ENCODE measurements at regions of chr17 and their contacts with region 1.

Region 1: DNA sequence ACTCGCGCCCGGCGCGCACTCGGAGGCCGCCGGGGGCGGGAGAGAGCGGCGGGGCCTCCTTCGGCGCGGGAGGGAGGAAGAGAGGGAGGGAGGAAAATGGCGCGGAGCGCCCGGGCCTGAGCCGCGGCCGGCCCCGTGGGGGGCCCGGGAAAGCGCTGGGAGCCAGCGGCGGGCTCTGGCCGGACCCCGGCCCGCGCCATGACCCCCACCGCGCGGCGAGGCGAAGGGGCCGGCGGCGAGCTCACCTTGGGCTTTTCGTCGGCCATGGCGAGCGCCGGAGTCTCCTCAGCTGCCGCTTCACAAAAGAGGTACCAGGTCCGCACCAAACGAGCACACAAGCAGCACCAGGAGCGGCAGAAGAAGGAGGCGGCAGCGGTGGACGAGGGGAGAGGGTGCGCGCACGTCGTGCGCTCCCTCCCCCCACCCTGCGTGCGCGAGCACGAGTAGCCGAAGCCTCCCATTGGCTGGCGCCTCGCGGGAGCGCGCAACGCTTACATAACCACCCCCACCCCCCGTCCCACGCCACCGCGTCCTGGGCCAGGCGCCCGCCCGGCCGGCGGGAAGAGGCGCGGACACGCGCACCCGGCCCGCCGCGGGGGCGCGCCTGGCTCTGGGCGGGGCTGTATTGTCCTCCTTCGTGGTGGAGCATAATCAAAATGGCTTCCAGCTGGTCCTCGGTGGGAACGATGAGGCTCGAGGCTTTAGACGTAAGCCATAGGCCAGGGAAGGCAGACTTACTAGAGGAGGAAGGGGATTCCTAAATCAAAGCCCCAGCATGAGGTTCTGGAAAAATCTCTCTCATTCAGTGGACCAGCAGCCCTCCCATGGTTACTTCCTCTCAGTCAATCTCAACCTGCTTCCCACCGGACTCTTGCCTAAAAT is at the start of gene SUMO2:
- DNase-seq: peak; percentile 92
- H3K4me3 Mint-ChIP-seq: peak within 1 kb of the TSS; percentile 88
- H3K27ac Mint-ChIP-seq: peak within 1 kb of the TSS; percentile 98
- H3K4me1 Mint-ChIP-seq: peaks cover 28% of the 10 kb centered on the region
- H3K27me3 Mint-ChIP-seq: no peaks in the 10 kb centered on the region
- total RNA-seq, gene SUMO2: 653 and 679 TPM in 2 replicates

Region 2: DNA sequence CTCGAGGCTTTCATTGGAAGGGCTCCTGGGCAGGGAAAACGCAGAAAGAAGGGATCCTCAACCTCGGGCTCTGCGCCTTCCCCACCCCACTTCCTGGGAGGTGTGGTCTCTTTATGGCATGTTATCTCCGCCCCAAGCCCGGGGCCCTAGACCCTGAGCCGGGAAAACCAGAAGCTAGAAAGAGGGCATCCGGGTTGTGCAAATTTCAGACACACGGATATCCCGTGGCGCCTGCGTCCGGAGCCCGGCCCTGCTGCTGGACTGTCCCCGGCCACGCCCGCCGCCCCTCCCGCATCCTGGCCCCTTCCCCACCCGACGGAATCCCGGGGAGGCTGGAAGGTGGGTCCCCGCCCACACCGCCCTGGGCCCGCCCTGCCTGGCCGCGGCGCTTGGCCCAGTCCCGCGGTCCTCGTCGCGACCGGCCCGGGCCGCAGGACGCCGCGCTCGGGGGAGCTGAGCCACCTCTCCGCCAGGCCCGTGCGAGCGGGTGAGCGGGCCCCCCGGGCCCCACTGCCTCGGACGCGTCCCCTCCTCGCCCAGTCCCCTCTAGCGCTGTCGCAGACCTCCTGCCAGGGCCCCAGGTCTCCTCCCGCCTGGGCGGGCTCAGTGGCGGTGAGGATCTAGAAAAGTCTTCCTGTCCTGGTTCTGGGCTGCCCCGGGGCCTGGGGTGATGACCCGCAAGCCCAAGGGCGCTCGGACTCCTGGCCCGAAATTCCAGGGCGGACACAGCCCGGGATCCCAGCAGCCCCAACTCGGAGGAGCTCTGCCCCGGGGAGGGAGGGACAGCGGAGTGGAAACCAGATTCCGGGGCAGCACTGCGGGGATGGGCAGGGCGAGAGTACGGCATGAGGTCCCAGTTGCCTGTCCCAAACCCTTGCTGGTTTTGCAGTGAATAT is 95.0 kb before region 1 on chr17 and contains the start of gene SLC16A5:
- intact Hi-C with region 1: no loop called
- DNase-seq: peak; percentile 48
- H3K4me3 Mint-ChIP-seq: peak within 1 kb of the TSS; percentile 82
- H3K27ac Mint-ChIP-seq: peak within 1 kb of the TSS; percentile 64
- H3K4me1 Mint-ChIP-seq: peaks cover 29% of the 10 kb centered on the region
- H3K27me3 Mint-ChIP-seq: no peaks in the 10 kb centered on the region
- total RNA-seq, gene SLC16A5: 11.6 and 11.8 TPM in 2 replicates

Region 3: DNA sequence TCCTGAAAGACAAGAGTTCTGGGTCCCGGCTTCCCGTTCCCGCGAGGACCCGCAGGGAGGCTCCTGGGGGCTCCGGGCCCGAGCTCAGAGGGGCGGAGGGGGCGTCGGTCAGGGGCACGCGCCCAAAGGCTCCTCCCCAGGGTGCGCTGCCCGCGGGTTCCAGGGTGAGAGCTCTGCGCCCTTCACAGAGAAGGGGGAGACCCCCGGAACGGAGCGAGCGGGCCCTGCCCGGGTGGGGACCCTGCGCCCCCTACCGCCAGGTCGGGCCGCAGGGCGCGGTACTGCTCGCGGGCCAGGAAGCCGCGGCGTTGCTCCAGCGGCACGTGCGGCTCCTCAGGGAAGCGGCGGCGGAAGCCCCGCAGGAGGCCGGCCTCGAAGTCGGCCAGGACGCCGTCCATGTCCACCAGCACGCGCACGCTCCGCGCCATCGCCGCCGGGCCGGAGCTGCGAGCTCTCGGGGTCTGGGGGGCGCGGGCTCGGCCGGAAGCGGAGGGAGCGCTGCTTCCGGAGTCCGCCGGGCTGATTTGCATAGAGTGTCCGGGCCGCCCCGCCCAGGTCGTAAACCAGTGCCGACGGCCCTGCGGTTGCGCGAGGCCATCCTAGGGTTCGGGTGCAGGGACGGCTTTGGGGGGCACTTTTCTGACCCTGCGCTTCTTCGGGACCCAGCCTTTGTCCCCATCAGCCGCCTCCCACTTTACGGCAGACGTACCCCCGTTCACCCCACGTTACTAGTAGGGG is 51.4 kb before region 1 on chr17 and contains the start of gene NT5C:
- intact Hi-C with region 1: loop called (anchors 10 kb)
- DNase-seq: peak; percentile 67
- H3K4me3 Mint-ChIP-seq: peak within 1 kb of the TSS; percentile 88
- H3K27ac Mint-ChIP-seq: peak within 1 kb of the TSS; percentile 83
- H3K4me1 Mint-ChIP-seq: peaks cover 9% of the 10 kb centered on the region
- H3K27me3 Mint-ChIP-seq: no peaks in the 10 kb centered on the region
- total RNA-seq, gene NT5C: 72.7 and 86.6 TPM in 2 replicates

Region 4: GRCh38 chr17:75154195-75155106 is 28.4 kb before region 1 on chr17 and contains the start of gene JPT1:
- intact Hi-C with region 1: loop called (anchors 1 kb)
- DNase-seq: peak; percentile 96
- H3K4me3 Mint-ChIP-seq: peak within 1 kb of the TSS; percentile 93
- H3K27ac Mint-ChIP-seq: peak within 1 kb of the TSS; percentile 84
- H3K4me1 Mint-ChIP-seq: peaks cover 33% of the 10 kb centered on the region
- H3K27me3 Mint-ChIP-seq: no peaks in the 10 kb centered on the region
- total RNA-seq, gene JPT1: 282 and 290 TPM in 2 replicates

Region 5: GRCh38 chr17:75205037-75205792 is 22.4 kb after region 1 on chr17 and contains the start of gene NUP85:
- intact Hi-C with region 1: loop called (anchors 2 kb)
- DNase-seq: peak; percentile 88
- H3K4me3 Mint-ChIP-seq: peak within 1 kb of the TSS; percentile 91
- H3K27ac Mint-ChIP-seq: peak within 1 kb of the TSS; percentile 96
- H3K4me1 Mint-ChIP-seq: peaks cover 11% of the 10 kb centered on the region
- H3K27me3 Mint-ChIP-seq: no peaks in the 10 kb centered on the region
- total RNA-seq, gene NUP85: 115 and 122 TPM in 2 replicates

Region 6: DNA sequence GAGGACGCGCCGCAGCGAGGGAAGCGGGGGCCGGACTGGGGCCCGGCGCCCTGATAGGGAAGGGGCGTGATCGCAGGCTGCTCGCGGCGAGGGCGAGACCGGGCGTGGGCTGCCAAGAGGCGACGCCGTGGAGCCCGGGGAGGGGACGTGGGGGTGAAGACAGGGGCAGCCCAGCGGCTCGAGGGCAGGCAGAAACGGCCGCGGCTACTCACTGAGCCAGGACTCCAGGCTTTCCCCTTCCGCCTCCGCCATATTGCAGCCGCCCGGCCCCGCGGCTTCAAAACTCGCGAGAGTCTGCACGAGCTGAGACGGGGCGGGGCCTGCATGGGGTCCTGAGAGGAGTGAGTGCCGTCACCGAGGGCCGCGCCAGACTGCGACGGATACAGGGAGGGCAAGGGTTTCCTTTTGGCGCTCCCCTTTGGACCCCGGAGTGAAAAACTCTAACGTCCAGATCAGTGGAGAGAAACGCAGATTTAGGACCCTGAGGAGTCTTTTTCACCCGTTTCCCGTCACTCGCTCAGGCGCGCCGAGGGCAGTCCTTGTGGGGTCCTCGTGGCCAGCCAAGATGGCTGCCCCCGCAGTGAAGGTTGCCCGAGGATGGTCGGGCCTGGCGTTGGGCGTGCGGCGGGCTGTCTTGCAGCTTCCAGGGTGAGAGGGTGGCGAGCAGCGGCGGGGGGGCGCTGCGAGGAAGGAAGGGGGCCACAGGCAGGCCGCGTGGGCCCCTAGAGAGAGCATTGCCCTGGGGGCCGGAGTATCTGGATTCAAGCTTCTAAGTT is 78.7 kb after region 1 on chr17 and contains the starts of genes GGA3 and MRPS7:
- intact Hi-C with region 1: loop called (anchors 5 kb)
- DNase-seq: peak; percentile 93
- H3K4me3 Mint-ChIP-seq: peak within 1 kb of the TSS; percentile 99
- H3K27ac Mint-ChIP-seq: peak within 1 kb of the TSS; percentile 100
- H3K4me1 Mint-ChIP-seq: peaks cover 43% of the 10 kb centered on the region
- H3K27me3 Mint-ChIP-seq: no peaks in the 10 kb centered on the region
- total RNA-seq, gene GGA3: 71.7 and 77.2 TPM in 2 replicates
- total RNA-seq, gene MRPS7: 99.4 and 101 TPM in 2 replicates

Region 7: GRCh38 chr17:75440738-75441448 is 258.1 kb after region 1 on chr17:
- intact Hi-C with region 1: no loop called
- DNase-seq: no peak
- H3K4me3 Mint-ChIP-seq: no peak overlapping the region
- H3K27ac Mint-ChIP-seq: no peak overlapping the region
- H3K4me1 Mint-ChIP-seq: peaks cover 5% of the 10 kb centered on the region
- H3K27me3 Mint-ChIP-seq: no peaks in the 10 kb centered on the region